Left cardiac atrium (tissue), 4 donors: ENCODE measurements at regions of chr20 and their contacts with region 1.

Region 1: GRCh38 chr20:45052698-45053429 is 48.1 kb downstream of the KCNS1 start:
- DNase-seq: no peak
- ATAC-seq: peak in 1 of 2 donors; percentile 51

Region 2: GRCh38 chr20:45090481-45090880 is 37.6 kb after region 1 on chr20:
- intact Hi-C with region 1: loop called in 1 of 2 experiments (anchors 5 kb)
- DNase-seq: no peak
- ATAC-seq: no peak